T-cell (primary cell): ENCODE measurements at regions of chr1 and their contacts with region 1.

Region 1: GRCh38 chr1:20174937-20175666 is 10.8 kb upstream of the UBXN10 start:
- DNase-seq: no peak
- ATAC-seq: no peak
- H3K4me3 ChIP-seq: no peak overlapping the region
- H3K4me3 Mint-ChIP-seq: no peak overlapping the region
- H3K27ac ChIP-seq: no peak overlapping the region
- H3K27ac Mint-ChIP-seq: no peak overlapping the region
- H3K4me1 ChIP-seq: peaks cover 0 to 14% of the 10 kb centered on the region in 2 experiments
- H3K4me1 Mint-ChIP-seq: peaks cover 12 to 17% (median 15%) of the 10 kb centered on the region in 3 donors
- H3K27me3 ChIP-seq: no peaks in the 10 kb centered on the region
- H3K27me3 Mint-ChIP-seq: no peaks in the 10 kb centered on the region

Region 2: DNA sequence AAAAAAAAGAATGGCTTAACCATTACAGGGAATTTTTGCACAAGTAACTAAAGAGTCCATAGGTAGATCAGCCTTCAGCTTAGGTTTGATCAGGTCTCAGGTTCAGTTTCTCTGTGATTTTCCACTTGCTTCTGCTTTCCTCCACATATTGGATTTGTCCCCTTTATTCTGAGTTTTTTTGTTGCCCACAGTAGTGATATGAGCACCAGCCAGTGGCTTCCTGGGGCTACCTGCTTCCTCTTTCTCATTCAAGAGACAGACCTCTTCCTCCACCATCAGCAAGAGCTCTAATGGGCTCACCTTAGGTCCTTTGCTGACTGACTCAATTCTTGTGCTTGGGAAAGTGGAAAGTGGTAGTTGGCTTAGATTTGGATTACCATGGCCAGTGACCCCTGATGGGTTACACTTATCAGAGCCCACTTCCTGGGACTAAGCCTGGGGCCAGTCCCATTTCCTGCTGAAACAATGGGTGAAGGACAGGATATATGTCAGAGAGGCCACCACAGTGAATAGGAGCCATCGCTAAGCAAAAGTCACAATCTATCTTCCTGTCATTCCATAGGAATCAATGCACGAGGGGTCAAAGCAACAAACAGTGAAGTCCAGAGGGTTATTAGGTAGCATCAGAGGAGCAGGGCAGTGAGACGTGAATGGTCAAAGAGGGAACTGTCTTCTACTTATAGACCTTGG is 238.9 kb before region 1 on chr1:
- CTCF ChIA-PET with region 1: no interaction called
- POLR2A ChIA-PET with region 1: interaction called in 1 of 2 experiments, 10 read pairs
- DNase-seq: no peak
- ATAC-seq: no peak
- H3K4me3 ChIP-seq: no peak overlapping the region
- H3K4me3 Mint-ChIP-seq: no peak overlapping the region
- H3K27ac ChIP-seq: no peak overlapping the region
- H3K27ac Mint-ChIP-seq: no peak overlapping the region
- H3K4me1 ChIP-seq: no peaks in the 10 kb centered on the region
- H3K4me1 Mint-ChIP-seq: no peaks in the 10 kb centered on the region
- H3K27me3 ChIP-seq: peaks cover 0 to 13% of the 10 kb centered on the region in 2 experiments
- H3K27me3 Mint-ChIP-seq: peaks cover 1 to 4% of the 10 kb centered on the region in 2 donors

Region 3: GRCh38 chr1:20197329-20197791 is 22.3 kb after region 1 on chr1:
- CTCF ChIA-PET with region 1: interaction called, 6 to 14 read pairs
- POLR2A ChIA-PET with region 1: no interaction called
- DNase-seq: no peak
- ATAC-seq: no peak
- H3K4me3 ChIP-seq: no peak overlapping the region
- H3K4me3 Mint-ChIP-seq: no peak overlapping the region
- H3K27ac ChIP-seq: no peak overlapping the region
- H3K27ac Mint-ChIP-seq: no peak overlapping the region
- H3K4me1 ChIP-seq: peaks cover 0 to 3% of the 10 kb centered on the region in 2 experiments
- H3K4me1 Mint-ChIP-seq: peaks cover 0 to 3% (median 0%) of the 10 kb centered on the region in 3 donors
- H3K27me3 ChIP-seq: peaks cover 0 to 17% of the 10 kb centered on the region in 2 experiments
- H3K27me3 Mint-ChIP-seq: peaks cover 18 to 24% of the 10 kb centered on the region in 2 donors

Region 4: GRCh38 chr1:20343149-20343937 is 168.2 kb after region 1 on chr1:
- CTCF ChIA-PET with region 1: no interaction called
- POLR2A ChIA-PET with region 1: no interaction called
- DNase-seq: peak in 20 of 35 experiments; percentile 8 to 45 (median 20)
- ATAC-seq: peak; percentile 55 to 78 (median 60)
- H3K4me3 ChIP-seq: no peak overlapping the region
- H3K4me3 Mint-ChIP-seq: peak overlapping the region in 1 of 3 donors; percentile 66
- H3K27ac ChIP-seq: no peak overlapping the region
- H3K27ac Mint-ChIP-seq: no peak overlapping the region
- H3K4me1 ChIP-seq: peaks cover 0 to 11% of the 10 kb centered on the region in 2 experiments
- H3K4me1 Mint-ChIP-seq: peaks cover 5 to 7% (median 7%) of the 10 kb centered on the region in 3 donors
- H3K27me3 ChIP-seq: peaks cover 0 to 42% of the 10 kb centered on the region in 2 experiments
- H3K27me3 Mint-ChIP-seq: peaks cover 27 to 28% of the 10 kb centered on the region in 2 donors

Region 5: DNA sequence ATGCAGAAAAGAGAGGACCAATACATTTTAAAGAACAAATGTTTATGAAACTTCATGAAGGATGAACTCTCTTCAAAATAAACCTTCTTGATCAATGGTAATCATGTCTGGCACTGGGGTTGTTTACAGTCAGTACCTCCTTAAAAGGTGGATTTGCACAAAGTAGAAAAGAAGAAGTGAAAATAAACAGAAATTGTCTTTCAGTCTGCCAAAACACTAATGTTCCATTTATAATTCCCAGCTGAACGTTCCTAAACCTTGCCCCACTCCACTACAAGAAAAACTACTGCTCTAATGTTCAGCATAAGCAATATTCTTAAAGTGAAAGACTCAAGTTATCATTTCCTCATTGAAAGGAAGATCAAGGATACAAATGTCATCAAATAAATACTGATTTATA is 915.4 kb after region 1 on chr1:
- CTCF ChIA-PET with region 1: no interaction called
- POLR2A ChIA-PET with region 1: no interaction called
- DNase-seq: no peak
- ATAC-seq: no peak
- H3K4me3 ChIP-seq: no peak overlapping the region
- H3K4me3 Mint-ChIP-seq: no peak overlapping the region
- H3K27ac ChIP-seq: no peak overlapping the region
- H3K27ac Mint-ChIP-seq: no peak overlapping the region
- H3K4me1 ChIP-seq: no peaks in the 10 kb centered on the region
- H3K4me1 Mint-ChIP-seq: peaks cover 2 to 13% (median 5%) of the 10 kb centered on the region in 3 donors
- H3K27me3 ChIP-seq: no peaks in the 10 kb centered on the region
- H3K27me3 Mint-ChIP-seq: no peaks in the 10 kb centered on the region